HepG2 (cell line): ENCODE measurements at regions of chr11 and their contacts with region 1.

Region 1: GRCh38 chr11:47099214-47099917 is 77.3 kb downstream of the ARFGAP2 start:
- DNase-seq: peak; percentile 76
- ATAC-seq: peak; percentile 50
- H3K4me3 ChIP-seq: no peak overlapping the region
- H3K27ac ChIP-seq: no peak overlapping the region
- H3K4me1 ChIP-seq: peaks cover 39% of the 10 kb centered on the region
- H3K27me3 ChIP-seq: no peaks in the 10 kb centered on the region
- CTCF ChIP-seq: no peak
- EP300 ChIP-seq: no peak
- POLR2A ChIP-seq: no peak
- RAD21 ChIP-seq: no peak

Region 2: DNA sequence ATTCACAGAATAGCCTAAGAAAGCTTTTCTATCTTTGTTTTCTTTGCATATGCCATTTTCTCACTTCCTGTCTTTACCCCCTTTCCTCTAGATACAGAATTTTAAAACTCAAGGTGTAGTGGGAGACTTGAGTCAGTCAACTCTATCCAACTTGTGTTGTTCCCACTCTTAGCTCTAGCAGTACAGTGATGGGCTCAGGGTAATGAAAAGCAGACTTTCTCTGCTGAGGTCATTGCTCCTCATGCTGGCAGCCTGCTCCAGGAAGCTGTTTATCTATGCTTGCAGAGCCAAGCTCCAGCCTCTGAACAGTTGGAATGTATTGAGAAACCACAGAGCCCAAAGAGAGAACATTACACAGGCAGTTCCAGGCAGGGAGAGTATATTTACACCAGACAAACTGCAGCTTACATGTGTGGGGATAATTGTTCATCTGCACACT is 94.8 kb before region 1 on chr11:
- CTCF ChIA-PET with region 1: no interaction called
- POLR2A ChIA-PET with region 1: no interaction called
- in situ Hi-C with region 1: no loop called
- intact Hi-C with region 1: loop called (anchors 10 kb)
- DNase-seq: peak; percentile 96
- ATAC-seq: peak; percentile 100
- H3K4me3 ChIP-seq: peak overlapping the region in 1 of 3 experiments; percentile 6; a peak in 1 of 6 replicates
- H3K27ac ChIP-seq: peak overlapping the region; percentile 53
- H3K4me1 ChIP-seq: peaks cover 25% of the 10 kb centered on the region
- H3K27me3 ChIP-seq: no peaks in the 10 kb centered on the region
- CTCF ChIP-seq: peak; percentile 57
- EP300 ChIP-seq: peak in 1 of 2 experiments; percentile 60; a peak in 2 of 4 replicates
- POLR2A ChIP-seq: no peak
- RAD21 ChIP-seq: 0 out of 2 replicates have a peak, but pooled peaks have one; percentile 17

Region 3: DNA sequence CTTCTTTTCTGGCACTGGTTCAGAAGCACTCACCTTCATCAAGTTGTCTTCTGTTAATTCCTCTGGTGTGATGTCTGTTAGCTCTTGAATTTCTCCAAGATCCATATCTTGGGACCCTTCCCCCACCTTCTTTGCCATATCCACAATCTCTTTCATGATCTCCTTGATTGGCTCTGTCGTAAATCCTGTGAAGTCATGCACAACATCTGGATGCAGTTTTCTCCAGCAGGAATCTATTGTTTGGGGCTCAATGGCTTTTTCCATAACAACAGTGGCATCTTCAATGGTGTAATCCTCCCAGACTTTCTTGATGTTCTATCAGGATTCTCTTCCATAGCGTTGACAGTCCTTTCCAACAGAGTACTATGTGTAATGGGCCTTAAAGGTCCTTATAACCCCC is 65.9 kb before region 1 on chr11:
- CTCF ChIA-PET with region 1: no interaction called
- POLR2A ChIA-PET with region 1: no interaction called
- in situ Hi-C with region 1: no loop called
- intact Hi-C with region 1: no loop called
- DNase-seq: no peak
- ATAC-seq: no peak
- H3K4me3 ChIP-seq: no peak overlapping the region
- H3K27ac ChIP-seq: no peak overlapping the region
- H3K4me1 ChIP-seq: 0 out of 2 replicates have a peak, but pooled peaks cover 7% of the 10 kb centered on the region
- H3K27me3 ChIP-seq: no peaks in the 10 kb centered on the region
- CTCF ChIP-seq: no peak
- EP300 ChIP-seq: no peak
- POLR2A ChIP-seq: no peak
- RAD21 ChIP-seq: no peak

Region 4: DNA sequence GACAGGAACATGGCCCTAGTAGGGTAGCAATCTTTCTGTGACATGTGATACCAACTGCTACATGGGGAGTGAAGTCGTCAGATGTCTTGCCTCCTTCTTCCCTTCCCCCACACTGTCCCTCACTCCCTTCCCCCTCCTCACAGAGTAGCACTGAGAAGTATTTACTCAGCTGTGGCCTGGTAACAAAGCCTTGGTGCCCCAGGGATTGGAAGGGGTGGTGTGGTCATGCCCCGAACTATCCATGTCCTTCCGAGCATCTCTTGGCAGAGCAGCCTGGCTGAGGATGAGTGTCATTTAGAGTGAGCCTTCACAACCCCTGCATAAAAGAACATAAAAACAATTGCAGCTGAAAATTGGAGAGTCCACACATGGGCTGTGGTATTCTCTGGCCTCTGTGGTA is 31.2 kb after region 1 on chr11:
- CTCF ChIA-PET with region 1: no interaction called
- POLR2A ChIA-PET with region 1: no interaction called
- in situ Hi-C with region 1: no loop called
- intact Hi-C with region 1: no loop called
- DNase-seq: no peak
- ATAC-seq: no peak
- H3K4me3 ChIP-seq: no peak overlapping the region
- H3K27ac ChIP-seq: no peak overlapping the region
- H3K4me1 ChIP-seq: no peaks in the 10 kb centered on the region
- H3K27me3 ChIP-seq: no peaks in the 10 kb centered on the region
- CTCF ChIP-seq: no peak
- EP300 ChIP-seq: no peak
- POLR2A ChIP-seq: no peak
- RAD21 ChIP-seq: no peak